Head of caudate nucleus (tissue), 42 donors: ENCODE measurements at regions of chr6 and their contacts with region 1.

Region 1: GRCh38 chr6:110815217-110816109 is at the start of gene CDK19:
- DNase-seq: peak; percentile 96 to 99 (median 98)

Region 2: GRCh38 chr6:110682460-110682853 is 133.0 kb before region 1 on chr6:
- intact Hi-C with region 1: loop called (anchors 10 kb)
- DNase-seq: peak in 31 of 42 donors; percentile 22 to 90 (median 71)